Activated CD8-positive, alpha-beta T cell treated with anti-CD3 and anti-CD28 coated beads for 36 hours (primary cell): ENCODE measurements at regions of chr10 and their contacts with region 1.

Region 1: GRCh38 chr10:103685880-103686669 is 169.3 kb downstream of the SH3PXD2A start:
- DNase-seq: peak; percentile 84
- ATAC-seq: peak; percentile 98
- H3K4me3 Mint-ChIP-seq: no peak overlapping the region
- H3K27ac Mint-ChIP-seq: no peak overlapping the region
- H3K4me1 Mint-ChIP-seq: peaks cover 1% of the 10 kb centered on the region
- H3K27me3 Mint-ChIP-seq: no peaks in the 10 kb centered on the region
- CTCF ChIP-seq: peak; percentile 90

Region 2: DNA sequence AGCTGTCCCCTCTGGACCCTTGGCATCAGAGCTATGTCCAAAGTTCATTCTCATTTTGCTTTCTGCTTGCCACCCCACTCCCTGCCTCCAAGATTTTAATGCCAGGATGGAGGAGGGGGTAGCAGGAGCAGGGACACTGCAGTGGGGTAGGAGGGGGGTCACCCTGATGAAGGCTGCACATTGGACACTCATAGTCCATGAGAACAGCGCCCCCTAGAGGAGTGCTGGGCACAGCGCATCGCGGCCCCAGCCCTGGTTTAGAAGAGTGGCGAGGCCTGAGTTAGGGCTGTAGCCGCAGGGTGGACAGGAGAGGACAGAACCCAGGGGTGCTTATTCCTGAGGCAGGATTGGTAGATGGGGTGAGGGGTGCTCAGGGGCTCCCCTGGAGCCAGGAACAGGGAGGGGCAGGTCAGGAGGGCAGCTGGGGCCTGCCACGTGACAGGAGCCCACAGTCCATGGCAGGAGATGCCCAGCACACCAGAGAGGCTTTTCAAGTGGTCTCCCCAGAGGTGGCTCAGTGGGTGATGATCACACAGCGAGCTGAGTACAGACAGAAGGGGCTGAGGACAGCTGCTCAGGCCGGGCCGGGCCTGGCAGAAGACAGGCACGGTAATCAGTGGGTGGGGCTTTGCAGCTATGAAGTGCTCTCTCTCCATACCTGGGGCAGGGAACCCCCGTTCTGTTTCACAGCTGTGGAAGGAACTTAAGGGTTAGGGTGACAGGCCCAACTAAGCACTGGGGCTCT is 121.1 kb before region 1 on chr10:
- CTCF ChIA-PET with region 1: interaction called, 15 read pairs
- POLR2A ChIA-PET with region 1: no interaction called
- intact Hi-C with region 1: no loop called
- DNase-seq: peak; percentile 74
- ATAC-seq: peak; percentile 85
- H3K4me3 Mint-ChIP-seq: no peak overlapping the region
- H3K27ac Mint-ChIP-seq: no peak overlapping the region
- H3K4me1 Mint-ChIP-seq: no peaks in the 10 kb centered on the region
- H3K27me3 Mint-ChIP-seq: peaks cover 2% of the 10 kb centered on the region
- CTCF ChIP-seq: peak; percentile 92

Region 3: DNA sequence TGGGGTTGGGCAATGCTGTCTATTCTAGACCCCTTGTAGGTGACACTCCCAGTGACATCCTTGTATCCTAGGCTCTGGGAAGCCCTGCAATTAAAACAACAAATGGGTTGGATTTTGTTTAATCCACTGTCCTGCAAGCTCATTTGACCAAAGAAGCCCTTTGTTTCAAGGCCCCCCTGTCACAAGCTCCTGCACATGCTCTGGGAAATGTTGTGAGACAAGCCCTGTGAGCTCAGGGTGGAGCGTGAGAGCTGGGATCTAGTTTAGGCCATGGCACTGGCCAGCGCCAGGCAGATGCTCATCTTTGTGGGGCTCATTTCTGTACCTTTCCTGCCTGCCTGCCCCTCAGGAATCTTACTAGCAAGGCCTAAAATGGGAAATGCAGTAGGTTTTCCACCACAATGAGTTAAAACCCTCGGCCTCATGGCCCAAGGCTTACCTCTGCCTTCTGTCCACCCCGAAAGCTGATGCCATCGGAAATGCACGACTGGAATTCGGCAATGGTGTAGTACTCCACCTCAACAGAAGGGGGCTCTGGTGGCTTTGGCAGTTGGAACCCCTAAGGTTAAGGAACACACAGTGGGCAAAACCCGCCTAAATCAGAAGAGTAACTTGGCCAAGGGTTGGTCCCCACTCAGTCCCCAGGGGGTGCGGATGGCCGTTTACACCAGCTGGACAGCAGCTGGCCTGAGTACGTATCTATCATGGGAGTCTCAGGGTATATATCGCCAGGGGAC is 80.5 kb before region 1 on chr10:
- CTCF ChIA-PET with region 1: interaction called, 99 read pairs
- POLR2A ChIA-PET with region 1: no interaction called
- intact Hi-C with region 1: loop called (anchors 5 kb)
- DNase-seq: peak; percentile 58
- ATAC-seq: peak; percentile 79
- H3K4me3 Mint-ChIP-seq: no peak overlapping the region
- H3K27ac Mint-ChIP-seq: no peak overlapping the region
- H3K4me1 Mint-ChIP-seq: no peaks in the 10 kb centered on the region
- H3K27me3 Mint-ChIP-seq: no peaks in the 10 kb centered on the region
- CTCF ChIP-seq: peak; percentile 77

Region 4: GRCh38 chr10:103630156-103630555 is 55.9 kb before region 1 on chr10:
- CTCF ChIA-PET with region 1: interaction called, 13 read pairs
- POLR2A ChIA-PET with region 1: no interaction called
- intact Hi-C with region 1: no loop called
- DNase-seq: no peak
- ATAC-seq: no peak
- H3K4me3 Mint-ChIP-seq: no peak overlapping the region
- H3K27ac Mint-ChIP-seq: no peak overlapping the region
- H3K4me1 Mint-ChIP-seq: no peaks in the 10 kb centered on the region
- H3K27me3 Mint-ChIP-seq: no peaks in the 10 kb centered on the region
- CTCF ChIP-seq: no peak

Region 5: GRCh38 chr10:103648921-103649532 is 37.0 kb before region 1 on chr10:
- CTCF ChIA-PET with region 1: interaction called, 12 read pairs
- POLR2A ChIA-PET with region 1: interaction called, 3 read pairs
- intact Hi-C with region 1: no loop called
- DNase-seq: no peak
- ATAC-seq: no peak
- H3K4me3 Mint-ChIP-seq: no peak overlapping the region
- H3K27ac Mint-ChIP-seq: no peak overlapping the region
- H3K4me1 Mint-ChIP-seq: no peaks in the 10 kb centered on the region
- H3K27me3 Mint-ChIP-seq: no peaks in the 10 kb centered on the region
- CTCF ChIP-seq: no peak

Region 6: GRCh38 chr10:103666087-103666761 is 19.9 kb before region 1 on chr10:
- CTCF ChIA-PET with region 1: interaction called, 21 read pairs
- POLR2A ChIA-PET with region 1: no interaction called
- intact Hi-C with region 1: no loop called
- DNase-seq: peak; percentile 32
- ATAC-seq: no peak
- H3K4me3 Mint-ChIP-seq: no peak overlapping the region
- H3K27ac Mint-ChIP-seq: no peak overlapping the region
- H3K4me1 Mint-ChIP-seq: peaks cover 12% of the 10 kb centered on the region
- H3K27me3 Mint-ChIP-seq: no peaks in the 10 kb centered on the region
- CTCF ChIP-seq: peak; percentile 19

Region 7: GRCh38 chr10:103712570-103713498 is 26.8 kb after region 1 on chr10:
- CTCF ChIA-PET with region 1: interaction called, 11 read pairs
- POLR2A ChIA-PET with region 1: no interaction called
- intact Hi-C with region 1: no loop called
- DNase-seq: peak; percentile 92
- ATAC-seq: peak; percentile 97
- H3K4me3 Mint-ChIP-seq: no peak overlapping the region
- H3K27ac Mint-ChIP-seq: no peak overlapping the region
- H3K4me1 Mint-ChIP-seq: no peaks in the 10 kb centered on the region
- H3K27me3 Mint-ChIP-seq: no peaks in the 10 kb centered on the region
- CTCF ChIP-seq: peak; percentile 90